SK-N-SH (cell line): ENCODE measurements at regions of chr17 and their contacts with region 1.

Region 1: GRCh38 chr17:65231662-65232335 is 94.6 kb downstream of the RGS9 start:
- DNase-seq: peak; percentile 86
- H3K4me3 ChIP-seq: peak overlapping the region in 1 of 2 experiments; percentile 20; a peak in 1 of 4 replicates
- H3K27ac ChIP-seq: no peak overlapping the region
- H3K4me1 ChIP-seq: peaks cover 10 to 29% of the 10 kb centered on the region in 2 experiments; a peak in 3 of 4 replicates
- H3K27me3 ChIP-seq: no peaks in the 10 kb centered on the region
- CTCF ChIP-seq: peak; percentile 97
- EP300 ChIP-seq: no peak
- RAD21 ChIP-seq: peak; percentile 98

Region 2: GRCh38 chr17:65219124-65219523 is 12.7 kb before region 1 on chr17:
- CTCF ChIA-PET with region 1: interaction called, 40 read pairs
- POLR2A ChIA-PET with region 1: no interaction called
- DNase-seq: no peak
- H3K4me3 ChIP-seq: no peak overlapping the region
- H3K27ac ChIP-seq: no peak overlapping the region
- H3K4me1 ChIP-seq: peaks cover 0 to 3% of the 10 kb centered on the region in 2 experiments; a peak in 1 of 4 replicates
- H3K27me3 ChIP-seq: peaks cover 29% of the 10 kb centered on the region; the same call in 1 of the 2 replicates
- CTCF ChIP-seq: peak; percentile 42
- EP300 ChIP-seq: no peak
- RAD21 ChIP-seq: peak; percentile 34; the same call in 1 of the 2 replicates

Region 3: DNA sequence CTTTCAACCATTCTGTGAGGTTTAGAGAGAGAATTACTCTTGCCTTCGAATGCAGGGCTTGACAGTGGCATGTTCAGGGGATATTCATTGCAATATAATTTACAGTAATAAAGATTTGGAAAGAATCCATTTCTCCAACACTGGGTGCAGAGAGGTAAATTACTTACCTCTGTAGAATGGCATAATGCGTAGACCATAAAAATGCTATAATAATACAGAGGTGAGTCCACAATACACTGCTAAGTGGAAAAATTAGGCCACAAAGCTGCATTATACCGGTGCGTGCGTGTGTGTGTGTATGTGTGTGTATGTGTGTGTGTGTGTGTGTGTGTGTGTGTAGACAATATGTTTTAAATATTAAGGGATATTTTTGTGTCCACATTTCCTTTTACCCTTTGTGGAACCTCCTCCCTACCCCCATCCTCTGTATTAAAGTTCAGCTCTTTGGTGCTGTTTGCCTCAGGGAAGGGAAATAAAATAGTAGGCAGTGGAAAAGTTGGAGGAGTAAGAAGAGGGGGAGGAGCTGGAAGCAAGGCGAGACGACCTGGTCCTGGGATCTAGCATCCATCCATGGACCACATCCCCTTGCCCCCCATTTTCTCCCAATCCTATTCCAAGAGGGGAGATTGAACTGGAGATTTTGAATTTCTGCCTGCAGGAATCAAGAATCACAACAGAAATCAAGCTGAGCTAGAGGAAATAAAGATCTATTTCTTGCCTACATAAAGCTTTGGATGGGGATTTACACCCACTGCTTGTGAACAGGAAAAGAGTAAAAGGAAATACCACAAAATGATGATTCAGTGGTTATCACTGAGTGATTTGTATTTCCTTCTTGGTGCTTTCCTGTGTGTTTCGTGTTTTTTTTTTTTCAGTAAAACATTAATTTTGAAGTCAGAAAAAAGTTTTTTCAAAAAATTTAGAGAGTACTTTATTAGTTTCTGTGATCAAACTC is 30.2 kb after region 1 on chr17:
- CTCF ChIA-PET with region 1: interaction called, 18 read pairs
- POLR2A ChIA-PET with region 1: no interaction called
- DNase-seq: no peak
- H3K4me3 ChIP-seq: no peak overlapping the region
- H3K27ac ChIP-seq: peak overlapping the region in 1 of 2 experiments; percentile 44; a peak in 2 of 4 replicates
- H3K4me1 ChIP-seq: peaks cover 0 to 16% of the 10 kb centered on the region in 2 experiments; a peak in 2 of 4 replicates
- H3K27me3 ChIP-seq: no peaks in the 10 kb centered on the region
- CTCF ChIP-seq: no peak
- EP300 ChIP-seq: no peak
- RAD21 ChIP-seq: no peak

Region 4: GRCh38 chr17:65287040-65287439 is 55.2 kb after region 1 on chr17:
- CTCF ChIA-PET with region 1: interaction called, 13 read pairs
- POLR2A ChIA-PET with region 1: no interaction called
- DNase-seq: no peak
- H3K4me3 ChIP-seq: no peak overlapping the region
- H3K27ac ChIP-seq: peak overlapping the region in 1 of 2 experiments; percentile 23; a peak in 1 of 4 replicates
- H3K4me1 ChIP-seq: peaks cover 0 to 9% of the 10 kb centered on the region in 2 experiments; a peak in 2 of 4 replicates
- H3K27me3 ChIP-seq: no peaks in the 10 kb centered on the region
- CTCF ChIP-seq: no peak
- EP300 ChIP-seq: peak in 1 of 2 experiments; percentile 46; a peak in 2 of 4 replicates
- RAD21 ChIP-seq: no peak

Region 5: DNA sequence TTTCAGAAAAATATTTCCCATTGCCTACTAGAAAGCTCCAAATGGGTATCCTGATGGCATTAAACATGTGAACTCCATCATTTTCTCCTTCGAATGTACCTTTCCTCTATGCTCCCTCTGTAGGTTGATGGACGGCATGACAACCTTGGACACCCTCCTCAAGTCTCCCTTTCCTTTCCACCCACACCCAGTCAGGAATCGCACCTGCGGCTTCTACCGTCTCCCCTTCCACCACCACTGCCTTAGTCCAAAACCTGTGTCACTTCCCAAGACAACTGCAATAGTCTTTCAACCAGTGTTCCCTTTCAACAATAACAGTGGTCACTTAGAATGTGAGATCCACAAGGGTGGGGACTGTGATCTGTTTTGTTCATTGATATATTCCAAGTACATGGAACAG is 562.8 kb after region 1 on chr17:
- CTCF ChIA-PET with region 1: interaction called, 11 read pairs
- POLR2A ChIA-PET with region 1: no interaction called
- DNase-seq: peak; percentile 43
- H3K4me3 ChIP-seq: no peak overlapping the region
- H3K27ac ChIP-seq: no peak overlapping the region
- H3K4me1 ChIP-seq: no peaks in the 10 kb centered on the region
- H3K27me3 ChIP-seq: no peaks in the 10 kb centered on the region
- CTCF ChIP-seq: peak; percentile 61
- EP300 ChIP-seq: no peak
- RAD21 ChIP-seq: peak; percentile 71